CD8-positive, alpha-beta T cell (primary cell): ENCODE measurements at regions of chr12 and their contacts with region 1.

Region 1: DNA sequence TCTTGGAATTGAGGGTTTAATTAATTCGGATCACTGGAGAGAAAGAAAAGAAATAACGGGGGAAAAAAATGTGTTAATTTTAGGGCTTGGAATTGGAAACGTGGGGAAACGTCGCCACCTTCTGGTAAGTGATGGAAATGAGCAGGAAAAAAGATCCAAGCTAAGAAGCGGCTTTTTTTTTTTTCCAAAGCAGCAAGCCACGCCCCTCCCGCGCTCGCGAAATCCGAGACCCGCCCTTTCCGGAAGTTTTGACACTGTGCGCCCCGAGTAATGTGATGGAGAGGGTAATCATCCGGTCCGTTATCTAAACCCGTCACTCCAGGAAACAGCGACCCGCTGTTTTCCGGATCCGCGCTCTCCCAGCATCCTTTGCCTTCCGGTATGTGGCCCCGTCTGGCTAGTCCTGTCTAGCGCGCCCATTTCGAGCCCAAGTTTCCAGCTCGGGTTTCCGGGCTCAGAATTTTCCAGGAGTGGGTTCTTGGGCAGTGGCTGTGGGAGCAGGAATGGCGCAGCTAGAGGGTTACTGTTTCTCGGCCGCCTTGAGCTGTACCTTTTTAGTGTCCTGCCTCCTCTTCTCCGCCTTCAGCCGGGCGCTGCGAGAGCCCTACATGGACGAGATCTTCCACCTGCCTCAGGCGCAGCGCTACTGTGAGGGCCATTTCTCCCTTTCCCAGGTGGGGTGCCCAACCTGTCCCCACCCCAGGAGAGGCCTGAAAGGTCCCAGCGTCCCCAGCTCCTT is at the start of gene ALG10B:
- DNase-seq: peak; percentile 85 to 97 (median 91)
- ATAC-seq: peak; percentile 95
- H3K4me3 ChIP-seq: peak within 1 kb of the TSS; percentile 69 to 74
- H3K4me3 Mint-ChIP-seq: peak within 1 kb of the TSS; percentile 88
- H3K27ac ChIP-seq: peak within 1 kb of the TSS; percentile 85 to 92
- H3K27ac Mint-ChIP-seq: peak within 1 kb of the TSS; percentile 97
- H3K4me1 ChIP-seq: peaks cover 26% of the 10 kb centered on the region
- H3K4me1 Mint-ChIP-seq: peaks cover 27% of the 10 kb centered on the region
- H3K27me3 ChIP-seq: no peaks in the 10 kb centered on the region
- H3K27me3 Mint-ChIP-seq: no peaks in the 10 kb centered on the region
- CTCF ChIP-seq: peak; percentile 70
- total RNA-seq, gene ALG10B: 7.2 to 10.3 TPM

Region 2: DNA sequence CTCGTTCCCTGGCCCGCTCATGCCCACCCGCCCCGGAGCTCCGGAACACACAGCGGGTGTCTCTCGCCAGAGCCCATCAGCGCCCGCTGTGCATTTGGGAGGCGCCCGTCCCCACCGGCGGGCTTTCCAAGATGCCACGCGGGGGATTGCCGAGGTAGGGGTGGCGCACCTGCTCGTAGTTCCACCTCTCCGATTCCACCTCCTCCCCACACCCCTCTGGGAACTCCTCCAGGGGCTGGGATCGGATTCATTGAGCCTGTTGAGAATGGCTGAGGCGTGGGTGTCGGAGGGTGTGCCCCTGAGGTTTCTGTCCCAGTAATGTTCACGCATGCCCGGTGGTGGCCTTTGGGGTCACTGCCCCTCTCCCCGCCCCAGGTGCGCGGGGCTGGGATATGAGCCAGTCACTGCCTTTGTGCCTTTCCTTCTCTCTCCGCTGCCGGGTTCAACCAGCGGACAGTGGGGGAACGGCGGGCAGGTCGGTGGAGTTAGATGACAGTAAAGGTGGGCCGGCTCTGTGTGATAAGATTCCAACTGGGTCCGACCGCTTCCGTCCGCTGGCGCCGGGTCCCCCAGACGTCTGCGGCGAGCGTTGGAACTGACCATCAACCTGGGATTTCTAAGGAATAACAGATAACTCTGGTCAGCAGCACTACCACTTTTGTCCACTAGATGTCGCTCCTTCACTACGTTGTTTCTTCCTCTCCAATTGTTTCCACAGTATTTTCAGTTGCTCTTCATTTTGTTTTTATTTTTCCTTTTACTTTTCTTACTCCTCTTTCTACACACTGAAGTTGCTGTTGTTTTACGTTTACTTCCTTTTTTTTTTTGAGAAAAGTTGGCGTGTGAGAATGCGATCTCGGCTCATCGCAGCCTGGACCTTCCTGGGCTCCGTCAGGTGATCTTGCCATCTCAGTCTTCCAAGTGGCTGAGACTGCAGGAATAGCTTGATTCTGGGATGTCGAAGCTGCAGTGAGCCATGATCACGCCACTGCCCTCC is 178.0 kb before region 1 on chr12:
- CTCF ChIA-PET with region 1: interaction called, 11 read pairs
- POLR2A ChIA-PET with region 1: no interaction called
- intact Hi-C with region 1: loop called (anchors 1 kb)
- DNase-seq: peak in 8 of 9 experiments; percentile 19 to 76 (median 62)
- ATAC-seq: peak; percentile 62
- H3K4me3 ChIP-seq: peak overlapping the region; percentile 29 to 36
- H3K4me3 Mint-ChIP-seq: peak overlapping the region; percentile 83
- H3K27ac ChIP-seq: no peak overlapping the region
- H3K27ac Mint-ChIP-seq: peak overlapping the region; percentile 41
- H3K4me1 ChIP-seq: peaks cover 5% of the 10 kb centered on the region
- H3K4me1 Mint-ChIP-seq: peaks cover 10% of the 10 kb centered on the region
- H3K27me3 ChIP-seq: no peaks in the 10 kb centered on the region
- H3K27me3 Mint-ChIP-seq: peaks cover 16% of the 10 kb centered on the region
- CTCF ChIP-seq: peak; percentile 98

Region 3: GRCh38 chr12:38332814-38333213 is 16.3 kb after region 1 on chr12:
- CTCF ChIA-PET with region 1: no interaction called
- POLR2A ChIA-PET with region 1: no interaction called
- intact Hi-C with region 1: loop called in 1 of 2 experiments (anchors 1 kb)
- DNase-seq: no peak
- ATAC-seq: no peak
- H3K4me3 ChIP-seq: no peak overlapping the region
- H3K4me3 Mint-ChIP-seq: no peak overlapping the region
- H3K27ac ChIP-seq: no peak overlapping the region
- H3K27ac Mint-ChIP-seq: no peak overlapping the region
- H3K4me1 ChIP-seq: no peaks in the 10 kb centered on the region
- H3K4me1 Mint-ChIP-seq: peaks cover 2% of the 10 kb centered on the region
- H3K27me3 ChIP-seq: no peaks in the 10 kb centered on the region
- H3K27me3 Mint-ChIP-seq: no peaks in the 10 kb centered on the region
- CTCF ChIP-seq: no peak

Region 4: GRCh38 chr12:38527631-38528030 is 211.1 kb after region 1 on chr12:
- CTCF ChIA-PET with region 1: no interaction called
- POLR2A ChIA-PET with region 1: no interaction called
- intact Hi-C with region 1: no loop called
- DNase-seq: no peak
- ATAC-seq: no peak
- H3K4me3 ChIP-seq: no peak overlapping the region
- H3K4me3 Mint-ChIP-seq: no peak overlapping the region
- H3K27ac ChIP-seq: no peak overlapping the region
- H3K27ac Mint-ChIP-seq: no peak overlapping the region
- H3K4me1 ChIP-seq: no peaks in the 10 kb centered on the region
- H3K4me1 Mint-ChIP-seq: no peaks in the 10 kb centered on the region
- H3K27me3 ChIP-seq: no peaks in the 10 kb centered on the region
- H3K27me3 Mint-ChIP-seq: no peaks in the 10 kb centered on the region
- CTCF ChIP-seq: no peak

Region 5: GRCh38 chr12:38906482-38907170 is 590.1 kb after region 1 on chr12:
- CTCF ChIA-PET with region 1: no interaction called
- POLR2A ChIA-PET with region 1: no interaction called
- intact Hi-C with region 1: loop called in 1 of 2 experiments (anchors 5 kb)
- DNase-seq: peak in 8 of 9 experiments; percentile 42 to 77 (median 55)
- ATAC-seq: peak; percentile 67
- H3K4me3 ChIP-seq: peak overlapping the region; percentile 65 to 70
- H3K4me3 Mint-ChIP-seq: peak overlapping the region; percentile 85
- H3K27ac ChIP-seq: no peak overlapping the region
- H3K27ac Mint-ChIP-seq: no peak overlapping the region
- H3K4me1 ChIP-seq: peaks cover 5% of the 10 kb centered on the region
- H3K4me1 Mint-ChIP-seq: peaks cover 19% of the 10 kb centered on the region
- H3K27me3 ChIP-seq: no peaks in the 10 kb centered on the region
- H3K27me3 Mint-ChIP-seq: peaks cover 27% of the 10 kb centered on the region
- CTCF ChIP-seq: peak; percentile 40